ENCODE measurements at regions of chr18 and their contacts with region 1.

Region 1: GRCh38 chr18:56019908-56020307 is 431.9 kb upstream of the TCF4 start:
- DNase-seq: no peak

Region 2: GRCh38 chr18:55997151-55997561 is 22.8 kb before region 1 on chr18:
- intact Hi-C with region 1: no loop called
- DNase-seq: no peak

Region 3: GRCh38 chr18:56067969-56068671 is 48.2 kb after region 1 on chr18:
- intact Hi-C with region 1: loop called in 1 of 2 experiments (anchors 10 kb)
- DNase-seq: no peak